ENCODE measurements at regions of chr2 and their contacts with region 1.

Region 1: DNA sequence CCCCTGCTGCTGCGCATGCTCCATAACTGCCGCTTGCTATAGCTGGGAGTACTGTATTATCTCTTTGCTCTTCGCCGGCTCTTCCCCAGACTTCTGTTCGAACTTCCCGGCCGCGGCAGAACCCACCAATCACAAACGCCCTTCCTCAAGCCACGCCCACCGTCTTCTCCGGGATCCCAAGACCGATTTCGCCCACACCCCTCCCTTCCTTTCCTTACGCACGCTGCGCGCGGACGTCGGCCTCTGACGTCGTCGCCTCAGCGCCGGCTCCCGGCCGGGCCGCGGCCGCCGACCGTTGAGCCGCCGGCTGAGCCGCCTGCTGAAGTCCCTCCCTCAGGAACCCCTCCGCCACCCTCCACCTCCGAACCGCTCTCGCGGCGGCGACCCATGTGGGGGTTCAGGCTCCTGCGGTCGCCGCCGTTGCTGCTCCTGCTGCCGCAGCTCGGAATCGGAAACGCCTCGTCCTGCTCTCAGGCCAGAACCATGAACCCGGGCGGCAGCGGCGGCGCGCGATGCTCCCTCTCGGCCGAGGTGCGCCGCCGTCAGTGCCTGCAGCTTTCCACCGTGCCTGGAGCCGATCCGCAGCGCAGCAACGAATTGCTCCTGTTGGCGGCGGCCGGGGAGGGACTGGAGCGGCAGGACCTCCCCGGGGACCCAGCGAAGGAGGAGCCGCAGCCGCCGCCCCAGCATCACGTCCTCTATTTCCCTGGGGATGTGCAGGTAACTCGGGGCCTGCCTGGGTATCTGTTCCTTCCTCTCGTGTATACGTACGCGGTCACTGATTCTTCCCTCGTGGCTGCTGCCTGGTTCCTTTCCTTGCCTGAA is at the start of gene C2orf69:
- H3K4me3 Mint-ChIP-seq: peak within 1 kb of the TSS; percentile 90
- H3K27ac Mint-ChIP-seq: peak within 1 kb of the TSS; percentile 91
- H3K4me1 Mint-ChIP-seq: peaks cover 20% of the 10 kb centered on the region
- H3K27me3 Mint-ChIP-seq: no peaks in the 10 kb centered on the region

Region 2: GRCh38 chr2:199147216-199147615 is 764.0 kb before region 1 on chr2:
- intact Hi-C with region 1: no loop called
- H3K4me3 Mint-ChIP-seq: no peak overlapping the region
- H3K27ac Mint-ChIP-seq: no peak overlapping the region
- H3K4me1 Mint-ChIP-seq: no peaks in the 10 kb centered on the region
- H3K27me3 Mint-ChIP-seq: no peaks in the 10 kb centered on the region

Region 3: GRCh38 chr2:199459286-199460016 is 451.8 kb before region 1 on chr2:
- intact Hi-C with region 1: loop called (anchors 5 kb)
- H3K4me3 Mint-ChIP-seq: peak overlapping the region; percentile 92
- H3K27ac Mint-ChIP-seq: peak overlapping the region; percentile 91
- H3K4me1 Mint-ChIP-seq: peaks cover 64% of the 10 kb centered on the region
- H3K27me3 Mint-ChIP-seq: peaks cover 75% of the 10 kb centered on the region

Region 4: DNA sequence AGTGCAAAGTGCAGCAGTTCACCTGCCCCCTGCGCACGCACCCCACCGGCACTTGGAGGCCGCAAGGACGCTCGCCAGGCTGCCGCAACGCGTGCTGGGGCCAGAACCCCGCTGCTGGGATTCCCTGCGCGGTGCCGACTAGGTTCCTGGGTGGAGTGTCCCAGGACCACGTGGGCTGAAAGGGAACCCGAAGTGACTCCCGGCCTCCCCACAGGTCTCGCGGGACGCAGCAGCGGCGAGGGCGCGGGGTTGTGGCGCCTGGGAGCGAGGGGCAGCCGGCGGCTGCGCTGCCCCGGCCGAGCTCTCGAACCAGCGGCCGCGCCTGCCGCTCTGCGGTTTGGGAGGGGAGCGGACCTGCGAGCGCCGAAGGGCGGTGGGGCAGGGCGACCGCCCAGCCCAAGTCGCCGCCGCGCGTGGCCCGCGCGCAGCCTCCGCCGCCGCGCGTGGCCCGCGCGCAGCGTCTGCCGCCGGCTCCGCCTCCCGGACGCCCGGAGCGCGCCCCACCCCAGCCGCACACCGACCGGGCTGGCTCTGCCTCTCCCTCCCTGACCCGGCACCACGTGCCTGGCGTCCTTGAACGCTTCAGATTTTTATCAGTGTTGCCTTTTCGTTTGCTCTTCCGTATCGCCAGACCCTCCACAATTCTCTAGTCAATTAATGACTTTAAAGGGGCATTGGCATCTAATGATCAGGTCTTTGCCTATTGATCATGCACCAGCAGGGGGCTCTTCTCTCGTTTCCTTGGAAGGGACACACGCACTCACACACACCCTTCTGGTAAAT is 60.4 kb before region 1 on chr2 and contains the start of gene FTCDNL1:
- intact Hi-C with region 1: loop called (anchors 2 kb)
- H3K4me3 Mint-ChIP-seq: peak within 1 kb of the TSS; percentile 84
- H3K27ac Mint-ChIP-seq: peak within 1 kb of the TSS; percentile 99
- H3K4me1 Mint-ChIP-seq: peaks cover 5% of the 10 kb centered on the region
- H3K27me3 Mint-ChIP-seq: no peaks in the 10 kb centered on the region

Region 5: GRCh38 chr2:199955339-199956261 is 44.3 kb after region 1 on chr2 and contains the starts of genes MAIP1 and TYW5:
- intact Hi-C with region 1: loop called (anchors 2 kb)
- H3K4me3 Mint-ChIP-seq: peak within 1 kb of the TSS; percentile 98
- H3K27ac Mint-ChIP-seq: peak within 1 kb of the TSS; percentile 92
- H3K4me1 Mint-ChIP-seq: peaks cover 40% of the 10 kb centered on the region
- H3K27me3 Mint-ChIP-seq: no peaks in the 10 kb centered on the region

Measured in dendritic cell treated with granulocyte-macrophage colony-stimulating factor and Interleukin-4, amounts not matched to agents 40 ng/mL and 50 ng/mL, for 4 days (primary cell).